ENCODE measurements at regions of chr19 and their contacts with region 1.

Region 1: DNA sequence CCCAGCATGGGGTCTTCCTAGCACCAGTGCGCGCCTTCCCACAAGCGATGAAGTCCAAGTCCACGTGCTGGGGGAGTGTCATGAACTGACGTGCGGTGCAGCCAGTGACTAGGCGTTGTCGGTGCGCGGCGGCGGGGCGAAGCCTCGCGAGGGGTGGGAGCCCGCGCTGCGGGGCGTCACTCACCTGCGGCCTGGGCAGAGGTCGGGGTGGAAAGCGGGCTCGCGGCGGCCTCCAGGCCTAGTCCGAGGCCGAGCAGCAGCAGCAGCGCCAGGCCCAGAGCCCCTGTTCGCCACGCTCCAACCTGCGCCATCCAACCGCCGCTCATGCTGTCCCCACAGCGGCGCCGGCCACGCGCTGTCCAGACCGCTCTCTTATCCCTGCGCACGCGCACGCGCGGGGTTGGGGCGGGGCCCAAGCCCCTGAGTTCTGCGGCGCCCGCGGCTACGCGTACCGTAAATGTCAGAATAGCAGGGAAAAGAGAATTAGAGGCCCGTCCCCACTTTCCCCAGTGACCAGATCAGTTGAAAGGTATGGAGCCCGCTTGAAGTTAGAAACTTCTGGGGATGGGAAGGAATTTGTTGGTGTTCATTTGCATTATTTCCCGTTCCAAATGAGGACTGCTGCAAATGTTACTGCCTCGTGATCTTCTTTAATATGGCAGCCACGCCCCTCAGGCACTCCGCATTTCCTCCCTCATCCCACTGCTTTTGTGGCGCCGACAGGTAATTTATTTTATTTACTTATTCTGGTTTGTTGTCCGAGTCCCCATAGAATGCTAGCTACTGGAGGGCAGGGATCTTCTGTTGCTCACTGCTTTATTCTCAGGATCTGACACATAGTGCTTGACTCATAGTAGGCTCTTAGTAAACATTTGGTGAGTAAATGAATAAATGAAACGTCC is at the start of gene CD320:
- DNase-seq: peak; percentile 92
- H3K4me3 ChIP-seq: peak within 1 kb of the TSS; percentile 43 to 48 (median 44)
- H3K27ac ChIP-seq: peak within 1 kb of the TSS; percentile 69
- H3K4me1 ChIP-seq: peaks cover 19% of the 10 kb centered on the region
- H3K27me3 ChIP-seq: no peaks in the 10 kb centered on the region
- CTCF ChIP-seq: no peak
- POLR2A ChIP-seq: peak; percentile 89
- total RNA-seq, gene CD320: 84.9 and 86.7 TPM in 2 replicates

Region 2: DNA sequence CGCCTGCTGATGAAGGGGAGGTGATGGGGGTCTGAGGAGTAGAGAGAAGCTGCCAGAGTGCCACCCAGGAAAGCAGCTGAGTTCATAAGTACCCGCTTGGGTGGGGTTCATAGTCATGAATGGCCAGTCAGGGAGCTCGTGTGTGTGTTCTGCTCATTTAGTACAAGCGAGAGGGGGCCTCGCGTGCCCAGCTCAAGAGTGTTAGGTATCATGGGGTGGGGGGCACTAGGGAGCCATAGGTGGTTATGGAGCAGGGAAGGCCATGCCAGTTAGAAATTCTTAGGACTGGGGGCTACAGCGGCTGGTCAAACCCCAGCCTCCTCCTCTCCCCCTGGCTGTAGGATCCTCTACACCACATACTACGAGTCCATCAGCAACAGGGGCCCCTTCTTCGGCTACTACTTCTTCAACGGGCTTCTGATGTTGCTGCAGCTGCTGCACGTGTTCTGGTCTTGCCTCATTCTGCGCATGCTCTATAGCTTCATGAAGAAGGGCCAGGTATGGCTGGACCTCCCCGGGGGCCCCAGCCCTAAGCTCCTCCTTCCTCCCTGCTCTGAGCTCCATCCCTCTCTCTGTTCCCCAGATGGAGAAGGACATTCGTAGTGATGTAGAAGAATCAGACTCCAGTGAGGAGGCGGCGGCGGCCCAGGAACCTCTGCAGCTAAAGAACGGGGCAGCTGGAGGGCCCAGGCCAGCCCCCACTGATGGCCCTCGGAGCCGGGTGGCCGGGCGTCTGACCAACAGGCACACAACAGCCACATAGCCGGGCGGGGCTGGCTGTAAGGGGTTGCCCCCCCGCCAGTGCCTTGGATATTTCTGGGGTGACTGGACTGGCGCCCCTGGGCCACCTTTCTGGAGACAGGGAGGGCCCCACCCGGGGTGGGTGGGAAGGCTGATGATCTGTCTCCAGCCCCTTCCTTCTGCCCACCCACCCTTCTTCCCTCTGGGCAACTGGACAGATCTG is 46.6 kb before region 1 on chr19:
- CTCF ChIA-PET with region 1: no interaction called
- POLR2A ChIA-PET with region 1: no interaction called
- dilution Hi-C with region 1: no loop called
- intact Hi-C with region 1: loop called (anchors 10 kb)
- DNase-seq: no peak
- H3K4me3 ChIP-seq: no peak overlapping the region
- H3K27ac ChIP-seq: no peak overlapping the region
- H3K4me1 ChIP-seq: no peaks in the 10 kb centered on the region
- H3K27me3 ChIP-seq: peaks cover 0 to 2% of the 10 kb centered on the region in 2 experiments
- CTCF ChIP-seq: no peak
- POLR2A ChIP-seq: no peak

Region 3: DNA sequence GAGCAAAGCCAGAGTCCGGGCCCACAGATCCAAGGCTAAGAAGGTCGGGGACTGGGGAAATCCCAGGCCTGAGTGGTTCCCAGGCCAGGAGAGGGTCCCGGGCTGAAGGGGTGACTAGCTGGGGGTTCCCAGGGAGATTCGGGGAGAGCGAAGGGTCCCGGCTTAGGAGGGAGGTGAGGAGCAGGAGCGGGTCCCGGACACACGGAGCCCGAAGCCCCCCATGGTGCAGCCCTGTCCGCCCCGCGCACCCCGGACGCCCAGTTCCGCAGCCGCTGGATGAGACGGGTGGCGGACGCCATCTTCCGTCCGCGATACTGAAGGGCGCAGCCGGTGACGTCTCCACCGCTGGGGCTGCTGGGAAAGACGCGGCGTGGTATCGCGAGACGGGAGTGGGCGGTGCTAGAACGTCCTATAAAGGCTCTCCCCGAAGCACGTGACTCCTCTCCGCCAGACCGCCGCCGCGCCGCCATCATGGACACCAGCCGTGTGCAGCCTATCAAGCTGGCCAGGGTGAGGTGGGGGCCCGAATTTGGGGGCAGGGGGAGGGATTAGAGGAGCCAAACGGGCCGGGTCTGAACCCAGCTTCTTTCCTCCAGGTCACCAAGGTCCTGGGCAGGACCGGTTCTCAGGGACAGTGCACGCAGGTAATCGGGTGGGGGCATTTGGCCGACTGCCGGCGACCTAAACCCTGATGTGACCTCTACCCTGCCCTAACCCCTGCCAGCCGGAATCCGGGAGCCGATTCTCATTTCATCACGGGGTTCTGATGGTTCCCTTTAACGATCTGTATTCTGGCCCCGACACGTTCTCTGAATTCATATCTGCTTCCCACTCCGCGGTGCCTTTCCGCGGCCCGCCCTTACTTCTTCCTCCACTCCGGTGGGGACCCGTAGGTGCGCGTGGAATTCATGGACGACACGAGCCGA is 13.1 kb after region 1 on chr19 and contains the starts of genes NDUFA7 and RPS28:
- CTCF ChIA-PET with region 1: interaction called, 4 read pairs
- POLR2A ChIA-PET with region 1: no interaction called
- dilution Hi-C with region 1: no loop called
- intact Hi-C with region 1: loop called (anchors 1 kb)
- DNase-seq: peak; percentile 97
- H3K4me3 ChIP-seq: peak within 1 kb of the TSS; percentile 83 to 95 (median 92)
- H3K27ac ChIP-seq: peak within 1 kb of the TSS; percentile 82
- H3K4me1 ChIP-seq: peaks cover 26% of the 10 kb centered on the region
- H3K27me3 ChIP-seq: no peaks in the 10 kb centered on the region
- CTCF ChIP-seq: peak in 1 of 2 donors; percentile 12
- POLR2A ChIP-seq: peak; percentile 97
- total RNA-seq, gene NDUFA7: 60.2 and 62.0 TPM in 2 replicates
- total RNA-seq, gene RPS28: 1,555 and 1,664 TPM in 2 replicates